ENCODE measurements at regions of chr1 and their contacts with region 1.

Region 1: GRCh38 chr1:18020021-18020817 is 87.4 kb upstream of the IGSF21 start:
- DNase-seq: no peak
- H3K4me3 ChIP-seq: no peak overlapping the region
- H3K27ac ChIP-seq: no peak overlapping the region
- H3K4me1 ChIP-seq: no peaks in the 10 kb centered on the region
- H3K27me3 ChIP-seq: peaks cover 58% of the 10 kb centered on the region
- CTCF ChIP-seq: no peak
- EP300 ChIP-seq: no peak
- POLR2A ChIP-seq: no peak

Region 2: GRCh38 chr1:18326211-18326897 is 306.1 kb after region 1 on chr1:
- in situ Hi-C with region 1: no loop called
- intact Hi-C with region 1: loop called (anchors 5 kb)
- DNase-seq: no peak
- H3K4me3 ChIP-seq: no peak overlapping the region
- H3K27ac ChIP-seq: no peak overlapping the region
- H3K4me1 ChIP-seq: peaks cover 0 to 11% (median 6%) of the 10 kb centered on the region in 4 donors
- H3K27me3 ChIP-seq: peaks cover 2% of the 10 kb centered on the region
- CTCF ChIP-seq: no peak
- EP300 ChIP-seq: no peak
- POLR2A ChIP-seq: no peak